HCT116 (cell line): ENCODE measurements at regions of chr20 and their contacts with region 1.

Region 1: GRCh38 chr20:50115591-50116372 is 2.8 kb upstream of the UBE2V1 start:
- DNase-seq: peak; percentile 90
- ATAC-seq: peak; percentile 80
- H3K4me3 ChIP-seq: peak overlapping the region; percentile 51 to 64
- H3K27ac ChIP-seq: peak overlapping the region; percentile 55
- H3K4me1 ChIP-seq: peaks cover 24 to 40% of the 10 kb centered on the region in 2 experiments
- H3K27me3 ChIP-seq: no peaks in the 10 kb centered on the region
- CTCF ChIP-seq: no peak
- POLR2A ChIP-seq: peak; percentile 73
- RAD21 ChIP-seq: no peak

Region 2: GRCh38 chr20:50061742-50062516 is 53.9 kb before region 1 on chr20:
- CTCF ChIA-PET with region 1: no interaction called
- POLR2A ChIA-PET with region 1: no interaction called
- RAD21 ChIA-PET with region 1: no interaction called
- intact Hi-C with region 1: no loop called
- DNase-seq: no peak
- ATAC-seq: no peak
- H3K4me3 ChIP-seq: no peak overlapping the region
- H3K27ac ChIP-seq: no peak overlapping the region
- H3K4me1 ChIP-seq: peaks cover 5 to 10% of the 10 kb centered on the region in 2 experiments
- H3K27me3 ChIP-seq: no peaks in the 10 kb centered on the region
- CTCF ChIP-seq: no peak
- POLR2A ChIP-seq: no peak
- RAD21 ChIP-seq: no peak

Region 3: DNA sequence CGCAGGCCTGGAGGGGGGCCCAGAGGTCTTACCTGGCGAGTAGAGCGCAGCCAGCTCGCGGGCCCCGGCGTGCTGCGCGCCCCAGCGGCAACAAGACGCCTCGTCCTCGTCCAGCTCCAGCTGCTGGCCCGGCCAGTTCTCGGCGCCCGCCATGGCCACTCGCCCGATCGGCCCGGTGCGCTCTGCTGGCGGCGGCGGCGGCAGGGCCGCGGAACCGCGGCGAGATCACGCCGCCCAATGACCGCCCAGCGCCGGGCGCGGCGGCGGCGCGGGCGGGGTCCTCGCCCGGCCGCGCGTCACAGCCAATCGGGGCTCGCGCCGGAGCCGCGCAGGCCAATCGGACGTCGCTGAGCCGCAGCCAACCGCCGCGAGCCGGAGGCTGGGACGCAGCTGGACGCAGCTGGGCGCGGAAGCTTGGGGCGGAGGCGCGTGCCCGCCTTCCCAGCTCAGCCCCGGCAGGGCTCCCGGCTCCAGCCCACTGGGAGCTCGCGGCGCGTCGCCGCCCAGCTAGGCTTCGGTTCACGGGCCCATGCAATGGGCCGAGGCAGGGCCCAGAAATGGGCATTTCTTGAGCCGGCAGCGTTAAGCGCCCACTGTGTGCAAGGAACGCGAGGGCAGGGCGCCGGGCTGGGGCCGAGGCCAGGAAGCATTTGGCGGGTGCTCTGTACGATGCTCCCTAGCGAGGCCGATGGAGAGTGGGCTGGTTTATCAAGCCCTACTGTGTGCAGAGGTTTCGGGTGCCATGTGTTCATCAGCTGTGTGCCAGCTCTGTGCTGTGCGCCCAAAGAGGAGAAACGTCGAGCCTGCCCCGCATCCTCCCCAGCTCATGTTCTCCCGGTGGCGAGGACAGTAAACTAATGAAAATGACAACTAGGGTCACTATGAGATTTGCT is 37.9 kb after region 1 on chr20 and contains the start of gene PEDS1:
- CTCF ChIA-PET with region 1: interaction called, 7 read pairs
- POLR2A ChIA-PET with region 1: interaction called, 11 read pairs
- RAD21 ChIA-PET with region 1: interaction called in 1 of 2 experiments, 4 read pairs
- intact Hi-C with region 1: no loop called
- DNase-seq: peak; percentile 66
- ATAC-seq: peak; percentile 93
- H3K4me3 ChIP-seq: peak within 1 kb of the TSS; percentile 80 to 95
- H3K27ac ChIP-seq: peak within 1 kb of the TSS; percentile 90
- H3K4me1 ChIP-seq: peaks cover 30 to 52% of the 10 kb centered on the region in 2 experiments
- H3K27me3 ChIP-seq: no peaks in the 10 kb centered on the region
- CTCF ChIP-seq: no peak
- POLR2A ChIP-seq: peak; percentile 82
- RAD21 ChIP-seq: no peak
- total RNA-seq, gene PEDS1: 31.9 TPM